Mammary epithelial cell (primary cell): ENCODE measurements at regions of chr18 and their contacts with region 1.

Region 1: DNA sequence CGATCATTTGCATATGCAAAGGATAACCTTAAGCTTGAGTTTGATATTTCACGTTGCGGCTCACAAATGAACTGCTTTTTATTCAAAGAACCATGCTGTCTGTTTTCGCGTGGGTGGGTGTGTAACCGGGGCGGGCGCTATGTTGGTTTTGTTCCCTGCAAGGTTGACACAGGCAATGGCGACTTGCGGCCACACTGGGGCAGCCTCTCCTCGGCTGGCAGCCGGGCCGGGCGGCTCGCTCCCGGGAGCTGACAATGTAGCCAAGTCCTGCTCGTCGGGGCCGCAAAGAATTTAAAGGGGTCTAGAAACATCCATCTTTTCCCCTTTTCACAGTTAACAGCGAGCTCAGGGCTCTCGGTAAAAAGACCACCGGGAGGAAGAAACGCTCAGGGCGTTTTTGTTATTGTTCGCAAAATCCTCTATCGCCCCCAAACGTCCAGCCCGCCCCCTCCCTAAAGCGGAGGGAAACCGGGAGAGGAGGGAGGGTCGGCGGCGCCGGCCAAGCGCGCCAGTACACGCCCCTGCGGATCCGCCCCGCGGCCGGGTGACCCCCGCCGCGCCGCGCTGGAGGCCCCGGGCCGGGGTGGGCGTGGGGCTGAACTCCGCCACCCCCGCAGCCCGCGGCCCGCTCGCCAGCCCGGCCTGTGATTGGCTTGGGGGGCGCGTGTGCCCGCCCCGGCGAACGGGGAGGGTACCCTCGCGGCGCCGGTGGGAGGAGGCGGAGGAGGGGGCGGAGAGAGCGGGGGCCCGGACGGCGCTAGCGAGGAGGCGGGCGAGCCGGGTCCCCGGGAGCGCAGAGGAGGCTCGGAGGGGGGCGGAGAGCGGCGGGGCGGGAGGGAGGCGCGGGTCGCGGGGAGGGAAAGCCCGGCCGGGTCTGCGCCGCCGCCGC is at the start of gene NEDD4L:
- DNase-seq: peak; percentile 82
- H3K4me3 ChIP-seq: peak within 1 kb of the TSS; percentile 80 to 90 (median 85)
- H3K27ac ChIP-seq: peak within 1 kb of the TSS; percentile 71
- H3K4me1 ChIP-seq: peaks cover 17% of the 10 kb centered on the region
- H3K27me3 ChIP-seq: no peaks in the 10 kb centered on the region
- CTCF ChIP-seq: peak; percentile 57 to 93
- total RNA-seq, gene NEDD4L: 145 to 148 TPM

Region 2: DNA sequence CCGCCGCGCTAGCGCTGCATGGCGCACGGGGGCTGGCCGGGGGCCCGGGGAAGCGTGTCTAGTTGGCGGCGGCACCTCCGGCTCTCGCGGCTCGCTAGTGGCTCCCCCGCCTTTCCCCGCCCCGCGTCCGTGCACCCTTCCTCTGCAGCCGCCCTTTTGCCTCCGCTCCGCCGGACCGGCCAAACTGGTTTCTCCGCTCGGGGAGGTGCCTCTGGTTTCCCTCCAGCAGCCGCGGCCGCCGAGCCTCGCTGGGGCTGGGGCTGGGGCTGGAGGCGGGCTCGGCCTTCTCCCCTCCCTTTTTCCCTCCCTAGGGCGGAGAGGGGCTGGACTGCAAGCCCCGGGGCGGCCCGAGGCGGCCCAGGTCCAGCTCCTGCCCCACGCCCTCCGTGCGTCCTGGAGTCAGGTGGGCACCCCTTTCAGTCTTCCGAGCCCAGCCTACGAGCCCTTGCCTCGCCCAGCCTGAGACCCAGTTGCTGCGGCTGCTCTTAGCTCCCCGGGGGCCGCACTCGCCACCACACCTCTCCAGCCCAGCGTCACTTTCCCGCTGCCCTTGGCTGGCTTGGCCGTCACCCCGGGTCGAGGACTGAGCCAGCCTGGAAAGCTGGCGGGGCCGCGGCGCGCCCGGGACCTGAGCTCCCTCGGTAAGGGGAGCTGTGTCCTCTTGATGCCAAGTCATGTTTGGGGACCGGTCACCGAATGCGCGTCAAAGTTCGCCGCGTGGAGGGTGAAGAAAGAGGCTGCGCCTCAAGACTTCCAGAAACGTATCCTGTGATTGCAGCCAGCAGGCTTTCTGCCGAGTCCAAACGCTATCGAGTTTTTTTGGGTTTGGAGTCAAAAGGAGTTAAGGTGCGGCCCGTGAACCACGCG is 240.4 kb before region 1 on chr18 and contains the start of gene ATP8B1:
- CTCF ChIA-PET with region 1: no interaction called
- dilution Hi-C with region 1: no loop called
- in situ Hi-C with region 1: no loop called
- intact Hi-C with region 1: loop called (anchors 5 kb)
- DNase-seq: peak; percentile 94
- H3K4me3 ChIP-seq: peak within 1 kb of the TSS; percentile 61 to 90 (median 74)
- H3K27ac ChIP-seq: peak within 1 kb of the TSS; percentile 39
- H3K4me1 ChIP-seq: peaks cover 38% of the 10 kb centered on the region
- H3K27me3 ChIP-seq: no peaks in the 10 kb centered on the region
- CTCF ChIP-seq: no peak
- total RNA-seq, gene ATP8B1: 12.7 to 15.0 TPM

Region 3: GRCh38 chr18:58091099-58091611 is 47.4 kb after region 1 on chr18:
- CTCF ChIA-PET with region 1: interaction called, 4 read pairs
- dilution Hi-C with region 1: no loop called
- in situ Hi-C with region 1: no loop called
- intact Hi-C with region 1: loop called (anchors 1 kb)
- DNase-seq: peak; percentile 77
- H3K4me3 ChIP-seq: no peak overlapping the region
- H3K27ac ChIP-seq: no peak overlapping the region
- H3K4me1 ChIP-seq: peaks cover 40% of the 10 kb centered on the region
- H3K27me3 ChIP-seq: no peaks in the 10 kb centered on the region
- CTCF ChIP-seq: no peak

Region 4: GRCh38 chr18:58135701-58136331 is 92.1 kb after region 1 on chr18:
- CTCF ChIA-PET with region 1: interaction called, 4 read pairs
- dilution Hi-C with region 1: no loop called
- in situ Hi-C with region 1: no loop called
- intact Hi-C with region 1: loop called (anchors 1 kb)
- DNase-seq: peak; percentile 52
- H3K4me3 ChIP-seq: no peak overlapping the region
- H3K27ac ChIP-seq: no peak overlapping the region
- H3K4me1 ChIP-seq: peaks cover 11% of the 10 kb centered on the region
- H3K27me3 ChIP-seq: no peaks in the 10 kb centered on the region
- CTCF ChIP-seq: peak; percentile 90 to 98

Region 5: DNA sequence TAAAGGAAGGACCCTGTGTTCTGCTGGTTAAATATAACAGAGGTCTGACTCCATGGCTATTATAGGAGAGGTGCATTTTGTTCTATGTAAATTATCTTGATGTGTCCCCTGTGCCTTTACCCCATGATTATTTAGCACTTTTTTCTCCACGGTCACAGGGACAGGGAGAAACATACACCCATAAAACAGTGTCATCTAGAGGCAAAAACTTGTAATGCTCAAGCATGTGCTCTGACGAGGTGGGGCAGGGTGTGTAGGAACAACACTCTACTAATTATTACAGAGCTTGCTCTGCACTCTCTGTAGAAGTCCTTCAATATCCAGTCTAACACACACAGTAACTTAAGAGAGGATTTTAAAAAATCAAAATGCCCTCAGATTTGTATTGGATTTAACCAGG is 188.2 kb after region 1 on chr18:
- CTCF ChIA-PET with region 1: interaction called, 4 read pairs
- dilution Hi-C with region 1: no loop called
- in situ Hi-C with region 1: no loop called
- intact Hi-C with region 1: loop called (anchors 1 kb)
- DNase-seq: no peak
- H3K4me3 ChIP-seq: no peak overlapping the region
- H3K27ac ChIP-seq: peak overlapping the region; percentile 86
- H3K4me1 ChIP-seq: peaks cover 52% of the 10 kb centered on the region
- H3K27me3 ChIP-seq: no peaks in the 10 kb centered on the region
- CTCF ChIP-seq: peak; percentile 47 to 68

Region 6: DNA sequence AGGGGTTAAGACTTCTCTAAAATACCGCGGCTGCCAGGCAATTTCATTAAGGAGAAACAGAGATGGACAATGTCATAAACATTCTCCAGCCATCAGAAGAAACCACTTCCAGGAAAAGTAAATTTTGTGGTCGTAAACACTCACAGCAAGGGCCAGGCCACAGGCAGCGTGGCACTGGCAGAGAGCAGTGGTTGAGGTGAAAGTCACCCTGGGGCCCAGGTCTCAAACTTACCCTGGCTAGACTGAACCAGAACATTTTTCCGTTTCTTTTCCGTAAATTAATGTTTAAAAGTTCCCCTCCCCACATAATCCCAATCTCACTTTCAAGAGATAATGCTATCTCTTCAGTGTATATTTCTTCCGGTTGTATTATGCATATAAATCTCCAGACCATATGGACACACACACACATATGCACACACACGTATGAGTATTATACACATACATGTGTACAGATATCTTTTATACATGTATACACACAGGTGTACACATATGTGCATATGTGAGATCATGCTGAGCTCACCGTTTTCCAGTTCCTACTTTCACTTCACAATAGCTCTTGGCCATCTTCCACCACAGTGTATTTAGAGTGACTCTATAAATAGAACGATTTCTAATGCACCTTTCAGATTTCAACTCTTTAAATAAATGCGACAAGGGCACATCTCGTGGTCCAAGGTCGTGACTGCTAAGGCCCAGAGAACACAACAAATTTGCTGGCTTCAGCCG is 717.7 kb after region 1 on chr18:
- CTCF ChIA-PET with region 1: no interaction called
- dilution Hi-C with region 1: no loop called
- in situ Hi-C with region 1: no loop called
- intact Hi-C with region 1: loop called (anchors 5 kb)
- DNase-seq: no peak
- H3K4me3 ChIP-seq: no peak overlapping the region
- H3K27ac ChIP-seq: no peak overlapping the region
- H3K4me1 ChIP-seq: no peaks in the 10 kb centered on the region
- H3K27me3 ChIP-seq: no peaks in the 10 kb centered on the region
- CTCF ChIP-seq: no peak